ENCODE measurements at regions of chr10 and their contacts with region 1.

Region 1: GRCh38 chr10:77173615-77174461 is 463.8 kb downstream of the KCNMA1 start:
- DNase-seq: no peak
- H3K4me3 ChIP-seq: no peak overlapping the region
- H3K27me3 ChIP-seq: no peaks in the 10 kb centered on the region
- CTCF ChIP-seq: peak; percentile 88

Region 2: GRCh38 chr10:77185696-77186095 is 11.9 kb after region 1 on chr10:
- CTCF ChIA-PET with region 1: interaction called, 12 read pairs
- POLR2A ChIA-PET with region 1: no interaction called
- DNase-seq: no peak
- H3K4me3 ChIP-seq: no peak overlapping the region
- H3K27me3 ChIP-seq: no peaks in the 10 kb centered on the region
- CTCF ChIP-seq: no peak

Region 3: GRCh38 chr10:77251297-77252013 is 77.6 kb after region 1 on chr10:
- CTCF ChIA-PET with region 1: interaction called, 37 read pairs
- POLR2A ChIA-PET with region 1: no interaction called
- DNase-seq: no peak
- H3K4me3 ChIP-seq: no peak overlapping the region
- H3K27me3 ChIP-seq: no peaks in the 10 kb centered on the region
- CTCF ChIP-seq: peak; percentile 69

Region 4: DNA sequence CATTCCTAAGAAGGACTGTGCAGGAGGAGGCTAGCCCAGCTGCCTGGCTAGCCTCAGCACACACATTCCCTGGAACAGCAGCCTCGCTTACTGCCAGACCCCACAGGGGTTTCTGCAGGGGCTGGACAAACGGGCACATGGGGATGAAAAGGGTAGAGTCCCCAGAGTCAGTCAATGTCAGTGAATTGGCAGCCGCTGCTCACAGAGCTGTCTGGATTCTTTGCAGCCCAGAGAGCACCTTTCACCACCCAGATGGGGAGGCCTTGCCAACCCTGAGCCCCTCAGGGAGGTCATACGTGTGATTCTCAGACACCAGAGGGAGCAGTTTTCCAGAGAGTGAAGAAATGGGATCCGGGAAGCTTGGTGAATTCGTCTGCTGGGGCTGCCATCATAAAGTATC is 320.5 kb after region 1 on chr10:
- CTCF ChIA-PET with region 1: interaction called, 10 read pairs
- POLR2A ChIA-PET with region 1: no interaction called
- DNase-seq: no peak
- H3K4me3 ChIP-seq: no peak overlapping the region
- H3K27me3 ChIP-seq: no peaks in the 10 kb centered on the region
- CTCF ChIP-seq: peak; percentile 45

Region 5: DNA sequence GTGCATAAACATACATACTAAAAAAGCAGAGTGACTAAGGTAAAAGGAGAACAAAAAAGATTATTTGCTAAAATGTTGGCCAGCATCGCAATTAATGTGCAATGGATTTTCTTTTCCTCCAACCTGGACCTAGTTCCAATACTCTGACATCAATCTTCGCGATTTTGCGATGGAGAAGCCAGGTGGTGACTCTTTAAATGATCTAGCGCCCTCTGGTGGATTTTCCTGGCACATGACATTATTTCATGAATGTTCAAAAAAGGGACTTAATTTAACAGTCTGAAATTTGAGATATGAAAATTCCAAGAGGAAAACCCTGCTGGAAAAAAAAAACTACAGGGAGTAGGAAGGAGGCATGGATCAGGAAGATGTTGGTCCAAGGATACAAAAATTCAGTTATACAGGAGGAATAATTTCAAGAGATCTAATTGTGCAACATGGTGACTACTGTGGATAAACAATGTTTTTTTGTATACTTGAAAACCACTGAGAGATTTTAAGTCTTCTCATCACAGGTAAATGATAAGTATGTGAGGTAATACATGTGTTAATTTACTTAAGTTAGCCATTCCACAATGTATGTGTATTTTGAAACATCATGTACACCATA is 468.1 kb after region 1 on chr10:
- CTCF ChIA-PET with region 1: interaction called, 374 read pairs
- POLR2A ChIA-PET with region 1: no interaction called
- DNase-seq: peak; percentile 27
- H3K4me3 ChIP-seq: no peak overlapping the region
- H3K27me3 ChIP-seq: no peaks in the 10 kb centered on the region; the same call in 1 of the 2 replicates
- CTCF ChIP-seq: peak; percentile 67